ENCODE measurements at regions of chr17 and their contacts with region 1.

Region 1: GRCh38 chr17:1122533-1123392 is 57.0 kb downstream of the ABR start:
- DNase-seq: peak; percentile 79
- H3K4me3 Mint-ChIP-seq: no peak overlapping the region
- H3K27ac Mint-ChIP-seq: peak overlapping the region; percentile 46
- H3K4me1 Mint-ChIP-seq: no peaks in the 10 kb centered on the region
- H3K27me3 Mint-ChIP-seq: no peaks in the 10 kb centered on the region
- CTCF ChIP-seq: peak; percentile 92

Region 2: GRCh38 chr17:1147661-1148060 is 24.9 kb after region 1 on chr17:
- CTCF ChIA-PET with region 1: interaction called, 19 read pairs
- POLR2A ChIA-PET with region 1: interaction called, 3 read pairs
- intact Hi-C with region 1: loop called (anchors 2 kb)
- DNase-seq: peak; percentile 86
- H3K4me3 Mint-ChIP-seq: no peak overlapping the region
- H3K27ac Mint-ChIP-seq: no peak overlapping the region
- H3K4me1 Mint-ChIP-seq: peaks cover 6% of the 10 kb centered on the region
- H3K27me3 Mint-ChIP-seq: no peaks in the 10 kb centered on the region
- CTCF ChIP-seq: peak; percentile 68

Region 3: DNA sequence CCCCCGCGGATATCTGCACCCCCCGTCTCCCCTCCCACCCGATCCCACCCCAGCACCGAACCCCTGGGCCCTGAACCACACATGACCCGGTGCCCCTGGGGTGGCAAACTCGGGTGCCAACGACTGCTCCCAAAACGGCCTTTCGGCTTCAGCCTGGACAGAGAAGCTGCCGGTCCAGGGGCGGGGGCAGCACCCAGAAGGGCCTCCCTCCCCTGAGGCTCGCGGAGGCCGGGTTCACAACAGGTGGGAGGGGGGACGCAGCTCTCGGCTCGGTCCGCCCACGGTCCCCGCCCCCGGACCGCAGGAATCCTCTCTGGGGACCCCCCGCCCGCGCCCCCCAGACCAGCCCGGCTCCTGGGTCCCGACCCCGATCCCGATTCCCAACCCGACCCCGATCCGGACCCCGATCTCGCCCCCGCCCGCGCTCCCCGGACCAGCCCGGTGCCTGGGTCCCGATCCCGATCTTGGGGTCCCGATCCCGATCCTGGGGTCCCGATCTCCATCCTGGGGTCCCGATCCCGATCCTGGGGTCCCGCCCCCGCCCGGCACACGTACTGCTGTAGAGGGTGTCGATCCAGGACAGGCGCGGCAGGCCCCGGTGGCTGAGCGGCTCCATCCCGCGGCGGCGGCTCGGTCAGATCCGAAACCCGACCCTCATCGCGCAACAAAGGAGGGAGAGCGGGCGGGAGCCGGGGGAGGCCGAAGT is 56.5 kb after region 1 on chr17:
- CTCF ChIA-PET with region 1: interaction called, 10 read pairs
- POLR2A ChIA-PET with region 1: no interaction called
- intact Hi-C with region 1: no loop called
- DNase-seq: peak; percentile 16
- H3K4me3 Mint-ChIP-seq: peak overlapping the region; percentile 67
- H3K27ac Mint-ChIP-seq: no peak overlapping the region
- H3K4me1 Mint-ChIP-seq: no peaks in the 10 kb centered on the region
- H3K27me3 Mint-ChIP-seq: no peaks in the 10 kb centered on the region
- CTCF ChIP-seq: no peak

Region 4: DNA sequence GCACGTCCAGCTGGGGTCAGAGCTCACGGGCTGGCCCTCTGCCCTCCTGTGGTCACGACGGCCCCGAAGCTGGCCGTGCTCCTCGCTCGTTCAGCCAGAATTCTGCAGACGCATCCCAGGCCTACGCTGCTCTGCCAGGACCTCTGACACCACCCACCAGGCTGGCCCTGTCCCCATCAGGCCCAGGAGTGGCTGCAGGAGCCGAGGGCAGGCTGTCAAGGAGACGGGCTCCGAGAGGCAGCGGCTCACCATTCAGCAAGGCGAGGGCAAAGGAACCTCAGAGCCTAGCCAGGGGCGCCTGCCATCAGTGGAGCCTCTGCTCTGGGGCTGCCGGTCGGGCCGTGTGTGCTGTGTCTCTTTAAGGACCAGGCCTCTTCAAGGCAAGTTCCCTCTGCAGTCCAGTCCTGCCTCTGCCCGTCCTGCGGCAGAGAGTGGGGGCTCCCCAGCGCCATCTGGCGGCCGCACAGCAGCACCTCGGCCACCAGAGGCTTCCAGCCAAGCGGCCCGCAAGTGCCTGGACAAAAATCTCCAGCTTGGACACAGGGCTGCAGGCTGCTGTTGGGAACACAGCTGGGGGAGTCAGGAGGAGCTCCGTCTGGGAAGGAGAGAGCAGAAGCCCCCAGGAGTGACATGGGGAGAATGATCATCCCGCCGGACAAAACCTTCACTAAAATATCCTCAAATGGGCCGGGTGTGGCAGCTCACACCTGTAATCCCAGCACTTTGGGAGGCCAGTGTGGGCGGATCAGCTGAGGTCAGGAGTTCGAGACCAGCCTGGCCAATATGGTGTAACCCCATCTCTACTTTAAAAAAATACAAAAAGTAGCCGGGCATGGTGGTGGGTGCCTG is 64.4 kb after region 1 on chr17:
- CTCF ChIA-PET with region 1: interaction called, 68 read pairs
- POLR2A ChIA-PET with region 1: interaction called, 3 read pairs
- intact Hi-C with region 1: loop called (anchors 1 kb)
- DNase-seq: peak; percentile 74
- H3K4me3 Mint-ChIP-seq: no peak overlapping the region
- H3K27ac Mint-ChIP-seq: no peak overlapping the region
- H3K4me1 Mint-ChIP-seq: peaks cover 25% of the 10 kb centered on the region
- H3K27me3 Mint-ChIP-seq: peaks cover 18% of the 10 kb centered on the region
- CTCF ChIP-seq: peak; percentile 95

Region 5: GRCh38 chr17:1661045-1661444 is 538.3 kb after region 1 on chr17:
- CTCF ChIA-PET with region 1: no interaction called
- POLR2A ChIA-PET with region 1: no interaction called
- intact Hi-C with region 1: no loop called
- DNase-seq: no peak
- H3K4me3 Mint-ChIP-seq: no peak overlapping the region
- H3K27ac Mint-ChIP-seq: no peak overlapping the region
- H3K4me1 Mint-ChIP-seq: no peaks in the 10 kb centered on the region
- H3K27me3 Mint-ChIP-seq: no peaks in the 10 kb centered on the region
- CTCF ChIP-seq: no peak

Measured in MCF 10A (cell line).